Astrocyte of the cerebellum (primary cell): ENCODE measurements at regions of chr16 and their contacts with region 1.

Region 1: GRCh38 chr16:19086322-19087199 is 19.1 kb downstream of the COQ7 start:
- DNase-seq: peak; percentile 52
- H3K4me3 ChIP-seq: peak overlapping the region; percentile 42
- CTCF ChIP-seq: peak; percentile 97

Region 2: GRCh38 chr16:18816286-18816685 is 270.3 kb before region 1 on chr16:
- in situ Hi-C with region 1: no loop called
- DNase-seq: no peak
- H3K4me3 ChIP-seq: no peak overlapping the region
- CTCF ChIP-seq: no peak

Region 3: GRCh38 chr16:19366391-19366790 is 279.8 kb after region 1 on chr16:
- in situ Hi-C with region 1: loop called (anchors 25 kb)
- DNase-seq: no peak
- H3K4me3 ChIP-seq: no peak overlapping the region
- CTCF ChIP-seq: no peak